Tibial artery (tissue), 4 donors: ENCODE measurements at regions of chr18 and their contacts with region 1.

Region 1: GRCh38 chr18:35415511-35416073 is 38.5 kb upstream of the ZNF396 start:
- DNase-seq: no peak
- H3K4me3 ChIP-seq: no peak overlapping the region
- H3K27ac ChIP-seq: no peak overlapping the region
- H3K4me1 ChIP-seq: peaks cover 0 to 8% (median 0%) of the 10 kb centered on the region in 4 donors
- H3K27me3 ChIP-seq: no peaks in the 10 kb centered on the region
- CTCF ChIP-seq: no peak

Region 2: DNA sequence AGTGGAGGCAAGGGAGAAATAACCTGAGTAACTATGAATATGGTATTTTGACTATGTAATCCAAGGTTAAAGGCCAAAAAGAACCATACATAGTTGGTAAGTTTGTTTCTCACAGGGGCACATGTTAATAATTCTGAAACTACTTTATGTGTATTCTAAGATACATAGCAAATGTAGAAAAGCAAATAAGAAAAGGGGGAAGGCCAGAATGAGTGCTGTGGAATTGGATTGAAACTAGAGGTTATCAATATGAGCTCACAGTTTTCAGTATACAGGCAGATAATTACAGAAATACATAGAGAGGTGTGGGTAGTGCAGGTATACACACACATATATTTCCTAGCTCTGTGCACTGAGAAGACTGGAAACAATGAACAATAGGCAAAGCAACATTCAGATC is 68.4 kb after region 1 on chr18:
- intact Hi-C with region 1: loop called (anchors 10 kb)
- DNase-seq: no peak
- H3K4me3 ChIP-seq: no peak overlapping the region
- H3K27ac ChIP-seq: no peak overlapping the region
- H3K4me1 ChIP-seq: peaks cover 0 to 26% (median 8%) of the 10 kb centered on the region in 4 donors
- H3K27me3 ChIP-seq: no peaks in the 10 kb centered on the region
- CTCF ChIP-seq: no peak